GM10248 (cell line): ENCODE measurements at regions of chr5 and their contacts with region 1.

Region 1: DNA sequence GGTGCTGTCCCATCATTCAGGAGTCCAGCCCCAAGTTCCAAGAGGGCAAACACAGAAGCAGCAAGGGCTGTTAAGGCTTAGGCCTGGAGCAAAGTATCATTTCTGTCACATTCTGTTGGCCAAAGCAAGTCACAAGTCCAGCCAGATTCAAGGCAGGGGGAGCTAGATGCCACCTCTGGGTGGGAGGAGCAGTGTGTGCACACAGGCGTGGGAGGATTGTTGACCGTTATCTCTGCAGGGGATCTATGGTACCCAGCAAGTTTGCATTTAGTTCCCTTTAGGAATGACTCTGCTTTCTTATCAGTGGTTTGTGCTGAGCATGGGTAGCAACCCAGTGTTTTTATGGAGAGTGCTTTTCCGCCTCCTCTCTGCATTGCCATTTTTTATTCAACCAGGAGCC is 278.9 kb downstream of the NR3C1 start:
- DNase-seq: no peak
- CTCF ChIP-seq: no peak

Region 2: DNA sequence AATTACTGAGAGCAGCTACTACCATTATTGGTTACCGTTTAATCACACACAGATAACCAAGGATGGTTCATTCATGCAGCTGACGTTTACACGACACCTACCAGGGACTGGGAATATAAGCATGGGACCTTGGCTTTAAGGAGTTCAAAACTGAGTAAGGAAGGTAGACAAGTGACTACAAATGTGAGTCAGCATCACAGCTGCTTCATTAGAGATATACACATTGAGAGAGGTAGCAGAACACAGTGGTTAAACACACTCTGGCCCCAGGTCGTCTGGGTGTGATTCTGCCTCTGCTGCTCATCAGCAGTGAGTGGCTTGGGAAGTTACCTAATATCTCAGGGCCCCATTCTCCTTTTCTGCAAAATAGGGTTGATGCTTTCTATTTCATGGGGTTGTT is 10.3 kb after region 1 on chr5:
- CTCF ChIA-PET with region 1: interaction called, 170 read pairs
- POLR2A ChIA-PET with region 1: no interaction called
- DNase-seq: no peak
- CTCF ChIP-seq: no peak